ENCODE measurements at regions of chr17 and their contacts with region 1.

Region 1: GRCh38 chr17:29116804-29117772 is 63.1 kb downstream of the MYO18A start:
- DNase-seq: peak; percentile 93
- ATAC-seq: peak; percentile 72
- H3K4me3 Mint-ChIP-seq: no peak overlapping the region
- H3K27ac Mint-ChIP-seq: no peak overlapping the region
- H3K4me1 Mint-ChIP-seq: peaks cover 9% of the 10 kb centered on the region
- H3K27me3 Mint-ChIP-seq: no peaks in the 10 kb centered on the region
- CTCF ChIP-seq: peak; percentile 98

Region 2: DNA sequence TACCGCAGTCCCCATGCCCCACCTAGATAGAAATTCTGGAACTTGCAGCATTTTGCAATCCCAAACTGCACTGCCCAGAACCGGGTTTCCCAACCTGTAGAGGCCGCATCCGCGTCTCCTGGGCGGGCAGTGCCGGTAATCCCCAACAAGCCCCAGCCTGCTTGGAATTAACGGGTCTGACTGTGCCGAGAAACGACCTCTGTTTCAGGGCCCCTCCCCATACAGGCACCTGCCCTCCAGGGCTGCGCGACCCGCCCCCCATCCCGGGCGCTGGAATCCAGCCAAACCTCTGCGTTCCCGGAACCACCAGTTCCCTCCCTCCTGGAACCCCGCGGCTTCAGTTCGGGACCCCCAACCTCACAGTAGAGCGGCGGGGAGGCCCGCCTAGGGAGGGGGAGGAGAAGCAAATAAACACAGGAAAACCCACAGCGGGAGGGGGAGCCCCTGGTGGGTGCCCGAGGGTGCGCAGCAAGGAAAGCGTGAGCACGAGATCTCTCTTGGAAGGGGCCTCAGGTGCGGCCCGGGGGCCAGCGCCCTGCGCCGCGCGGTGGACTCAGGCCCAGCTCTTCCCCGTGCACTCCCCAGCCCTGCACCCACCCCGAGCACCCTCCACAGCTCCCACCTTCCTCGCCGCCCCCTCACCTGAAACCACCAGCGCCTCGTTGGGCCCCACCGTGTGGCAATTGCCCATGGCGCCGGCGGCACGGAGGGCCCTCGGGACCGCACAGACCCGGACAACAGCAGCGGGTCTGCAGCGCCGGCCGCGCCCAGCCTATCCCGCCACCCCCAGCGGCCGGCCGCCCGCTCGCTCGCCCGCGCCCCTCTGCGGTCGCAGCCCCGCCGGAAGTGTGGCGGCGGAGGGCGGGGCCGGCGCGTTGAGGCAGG is 220.0 kb before region 1 on chr17 and contains the start of gene FLOT2:
- CTCF ChIA-PET with region 1: interaction called, 14 read pairs
- POLR2A ChIA-PET with region 1: no interaction called
- DNase-seq: peak; percentile 72
- ATAC-seq: peak; percentile 69
- H3K4me3 Mint-ChIP-seq: peak within 1 kb of the TSS; percentile 94
- H3K27ac Mint-ChIP-seq: peak within 1 kb of the TSS; percentile 93
- H3K4me1 Mint-ChIP-seq: peaks cover 33% of the 10 kb centered on the region
- H3K27me3 Mint-ChIP-seq: no peaks in the 10 kb centered on the region
- CTCF ChIP-seq: no peak
- total RNA-seq, gene FLOT2: 139 to 153 TPM (median 144 TPM) in 3 replicates

Region 3: DNA sequence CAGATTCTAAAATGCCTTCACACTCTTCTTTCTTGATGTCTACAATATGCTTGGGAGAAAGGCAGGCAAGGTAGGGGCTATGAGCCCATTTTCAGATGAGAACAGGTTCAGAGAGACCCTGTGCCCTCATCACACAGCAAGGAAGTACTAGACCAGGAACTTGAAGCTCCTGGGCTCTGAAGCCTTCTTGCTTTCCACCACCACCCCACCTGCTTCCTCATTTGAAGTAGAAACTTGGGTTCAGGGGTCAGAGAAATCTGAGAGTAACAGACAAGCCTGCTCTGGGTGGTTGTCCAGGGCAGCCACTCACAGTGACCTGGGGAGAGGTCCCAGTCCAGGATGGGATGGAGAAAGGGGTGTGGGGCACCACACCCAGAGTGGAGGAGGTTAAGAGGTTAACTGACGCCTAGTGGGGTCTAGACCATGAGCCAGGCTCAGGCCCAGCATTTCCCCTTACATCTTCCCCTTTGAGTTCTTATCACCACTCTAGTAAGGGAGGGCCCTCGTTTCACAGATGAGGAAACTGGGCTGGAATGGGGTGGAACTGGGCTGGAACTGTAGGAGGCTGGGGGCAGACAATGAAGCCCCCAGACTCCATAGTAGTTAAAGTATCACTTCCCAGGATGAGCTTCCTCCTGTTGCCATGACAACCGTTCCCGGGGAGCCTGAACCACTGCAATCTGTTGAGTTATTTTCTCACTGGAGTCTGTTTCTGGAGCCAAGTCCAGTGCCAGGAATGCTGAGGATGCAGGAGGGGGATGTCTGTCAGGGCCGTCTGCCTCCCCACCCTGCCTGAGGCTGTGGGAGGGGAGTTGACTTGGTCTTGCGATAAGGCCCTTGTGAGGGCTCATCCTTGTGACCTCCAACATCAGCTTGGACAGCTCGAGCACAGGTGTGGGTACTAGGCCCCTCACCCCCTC is 149.6 kb before region 1 on chr17:
- CTCF ChIA-PET with region 1: interaction called, 762 read pairs
- POLR2A ChIA-PET with region 1: interaction called, 4 read pairs
- DNase-seq: no peak
- ATAC-seq: no peak
- H3K4me3 Mint-ChIP-seq: no peak overlapping the region
- H3K27ac Mint-ChIP-seq: 0 out of 2 replicates have a peak overlapping the region, but pooled peaks have one; percentile 14
- H3K4me1 Mint-ChIP-seq: peaks cover 43% of the 10 kb centered on the region
- H3K27me3 Mint-ChIP-seq: no peaks in the 10 kb centered on the region; the same call in 1 of the 2 replicates
- CTCF ChIP-seq: no peak

Region 4: GRCh38 chr17:29019475-29020181 is 97.5 kb before region 1 on chr17:
- CTCF ChIA-PET with region 1: interaction called, 31 read pairs
- POLR2A ChIA-PET with region 1: no interaction called
- DNase-seq: peak; percentile 72
- ATAC-seq: peak; percentile 72
- H3K4me3 Mint-ChIP-seq: peak overlapping the region; percentile 62
- H3K27ac Mint-ChIP-seq: peak overlapping the region; percentile 69; the same call in 1 of the 2 replicates
- H3K4me1 Mint-ChIP-seq: peaks cover 67% of the 10 kb centered on the region
- H3K27me3 Mint-ChIP-seq: peaks cover 29% of the 10 kb centered on the region
- CTCF ChIP-seq: no peak

Region 5: DNA sequence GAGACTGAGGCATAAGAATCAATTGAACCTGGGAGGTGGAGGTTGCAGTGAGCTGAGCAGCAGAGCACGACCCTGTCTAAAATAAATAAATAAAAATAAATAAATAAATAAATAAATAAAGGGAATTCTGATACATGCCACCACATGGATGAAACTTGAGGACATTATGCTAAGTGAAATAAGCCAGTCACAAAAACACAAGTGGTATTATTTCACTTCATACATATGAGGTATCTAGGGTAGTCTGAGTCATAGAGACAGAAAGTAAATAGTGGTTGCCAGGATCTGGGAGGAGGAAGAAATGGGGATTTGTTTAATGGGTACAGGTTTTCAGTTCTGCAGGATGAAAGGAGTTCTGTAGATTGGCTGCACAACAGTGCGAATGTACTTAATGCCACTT is 57.8 kb before region 1 on chr17:
- CTCF ChIA-PET with region 1: interaction called, 53 read pairs
- POLR2A ChIA-PET with region 1: no interaction called
- DNase-seq: no peak
- ATAC-seq: no peak
- H3K4me3 Mint-ChIP-seq: no peak overlapping the region
- H3K27ac Mint-ChIP-seq: no peak overlapping the region
- H3K4me1 Mint-ChIP-seq: peaks cover 43% of the 10 kb centered on the region
- H3K27me3 Mint-ChIP-seq: no peaks in the 10 kb centered on the region
- CTCF ChIP-seq: no peak

Region 6: GRCh38 chr17:29090750-29091603 is 26.1 kb before region 1 on chr17:
- CTCF ChIA-PET with region 1: interaction called, 51 read pairs
- POLR2A ChIA-PET with region 1: no interaction called
- DNase-seq: no peak
- ATAC-seq: no peak; the same call in 1 of the 2 replicates
- H3K4me3 Mint-ChIP-seq: no peak overlapping the region
- H3K27ac Mint-ChIP-seq: peak overlapping the region; percentile 66
- H3K4me1 Mint-ChIP-seq: peaks cover 29% of the 10 kb centered on the region
- H3K27me3 Mint-ChIP-seq: no peaks in the 10 kb centered on the region
- CTCF ChIP-seq: no peak

Region 7: GRCh38 chr17:29180034-29180787 is 63.1 kb after region 1 on chr17 and contains the start of gene MYO18A:
- CTCF ChIA-PET with region 1: interaction called, 65 read pairs
- POLR2A ChIA-PET with region 1: no interaction called
- DNase-seq: peak; percentile 85
- ATAC-seq: peak; percentile 63
- H3K4me3 Mint-ChIP-seq: peak within 1 kb of the TSS; percentile 81
- H3K27ac Mint-ChIP-seq: peak within 1 kb of the TSS; percentile 93
- H3K4me1 Mint-ChIP-seq: peaks cover 32% of the 10 kb centered on the region
- H3K27me3 Mint-ChIP-seq: peaks cover 18% of the 10 kb centered on the region
- CTCF ChIP-seq: peak; percentile 74
- total RNA-seq, gene MYO18A: 38.5 to 54.9 TPM (median 42.5 TPM) in 3 replicates

Region 8: GRCh38 chr17:29369831-29370735 is 253.0 kb after region 1 on chr17:
- CTCF ChIA-PET with region 1: no interaction called
- POLR2A ChIA-PET with region 1: no interaction called
- DNase-seq: peak; percentile 68
- ATAC-seq: peak; percentile 94
- H3K4me3 Mint-ChIP-seq: no peak overlapping the region
- H3K27ac Mint-ChIP-seq: no peak overlapping the region
- H3K4me1 Mint-ChIP-seq: peaks cover 7% of the 10 kb centered on the region
- H3K27me3 Mint-ChIP-seq: no peaks in the 10 kb centered on the region
- CTCF ChIP-seq: peak; percentile 69